Right ventricle myocardium superior (tissue), 1 donor: ENCODE measurements at regions of chr9 and their contacts with region 1.

Region 1: GRCh38 chr9:37984672-37985611 is 81.0 kb upstream of the SLC25A51 start:
- DNase-seq: peak; percentile 62
- ATAC-seq: peak; percentile 77

Region 2: GRCh38 chr9:37920471-37921167 is 64.3 kb before region 1 on chr9:
- intact Hi-C with region 1: loop called (anchors 5 kb)
- DNase-seq: no peak
- ATAC-seq: no peak

Region 3: GRCh38 chr9:38068616-38068865 is 83.6 kb after region 1 on chr9:
- intact Hi-C with region 1: no loop called
- DNase-seq: peak; percentile 73
- ATAC-seq: peak; percentile 44

Region 4: DNA sequence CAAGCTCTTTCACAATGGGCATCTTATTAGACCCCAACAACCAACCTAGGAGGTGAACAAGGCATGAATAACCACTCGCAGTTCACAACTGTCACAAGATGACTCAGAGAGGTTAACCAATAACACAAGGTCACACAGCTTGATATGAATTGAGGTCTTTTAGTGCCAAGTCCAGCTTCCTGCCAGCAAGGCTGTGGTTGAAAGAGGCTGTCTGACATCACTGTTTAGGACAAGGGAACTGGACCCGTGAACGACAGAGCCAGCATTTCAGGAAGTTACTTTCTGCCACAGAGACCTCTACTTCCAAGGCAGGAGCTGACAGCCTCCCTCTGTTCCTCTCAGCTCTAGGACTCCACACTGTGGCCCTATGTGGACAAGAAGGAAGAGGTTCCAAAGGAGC is 354.1 kb after region 1 on chr9:
- intact Hi-C with region 1: no loop called
- DNase-seq: no peak
- ATAC-seq: peak; percentile 51